ENCODE measurements at regions of chrX and their contacts with region 1.

Region 1: GRCh38 chrX:109714340-109714958 is 18.6 kb downstream of the ACSL4 start:
- DNase-seq: no peak

Region 2: DNA sequence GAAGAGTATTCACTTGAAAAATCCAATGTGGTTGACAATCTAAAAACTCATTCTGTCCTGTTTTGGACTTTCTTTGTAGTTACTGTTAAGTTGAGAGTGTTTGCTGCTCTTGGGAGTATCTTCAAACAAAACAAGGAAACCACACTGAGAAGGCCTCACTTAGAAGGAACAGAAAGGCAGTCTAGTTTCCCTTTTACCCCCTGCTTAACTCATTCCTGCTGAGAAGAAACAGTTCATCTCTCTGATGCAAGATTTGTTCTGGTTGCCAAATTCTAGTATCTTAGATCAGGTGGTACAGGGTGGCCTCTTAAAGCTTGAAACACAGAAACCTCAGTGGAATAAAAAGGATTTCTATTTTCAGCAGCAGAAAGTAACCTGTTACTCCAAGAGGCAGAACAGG is 274.0 kb before region 1 on chrX:
- intact Hi-C with region 1: no loop called
- DNase-seq: no peak

Region 3: GRCh38 chrX:109856974-109857373 is 142.5 kb after region 1 on chrX:
- intact Hi-C with region 1: loop called (anchors 10 kb)
- DNase-seq: peak in 7 of 42 donors; percentile 3 to 41 (median 8)

Region 4: GRCh38 chrX:109886122-109886761 is 171.8 kb after region 1 on chrX:
- intact Hi-C with region 1: loop called (anchors 10 kb)
- DNase-seq: peak in 27 of 42 donors; percentile 2 to 60 (median 27)

Measured in head of caudate nucleus (tissue), 42 donors.